Heart right ventricle (tissue), 16 donors: ENCODE measurements at regions of chr13 and their contacts with region 1.

Region 1: GRCh38 chr13:26929971-26930730 is 169.6 kb upstream of the GPR12 start:
- DNase-seq: peak; percentile 51 to 76
- ATAC-seq: peak in 7 of 8 donors; percentile 62 to 81 (median 71)
- H3K4me3 ChIP-seq: no peak overlapping the region
- H3K27ac ChIP-seq: no peak overlapping the region
- H3K4me1 ChIP-seq: peaks cover 0 to 5% (median 0%) of the 10 kb centered on the region in 9 donors
- H3K27me3 ChIP-seq: peaks cover 0 to 22% (median 4%) of the 10 kb centered on the region in 7 donors
- CTCF ChIP-seq: peak; percentile 91 to 98 (median 96)

Region 2: DNA sequence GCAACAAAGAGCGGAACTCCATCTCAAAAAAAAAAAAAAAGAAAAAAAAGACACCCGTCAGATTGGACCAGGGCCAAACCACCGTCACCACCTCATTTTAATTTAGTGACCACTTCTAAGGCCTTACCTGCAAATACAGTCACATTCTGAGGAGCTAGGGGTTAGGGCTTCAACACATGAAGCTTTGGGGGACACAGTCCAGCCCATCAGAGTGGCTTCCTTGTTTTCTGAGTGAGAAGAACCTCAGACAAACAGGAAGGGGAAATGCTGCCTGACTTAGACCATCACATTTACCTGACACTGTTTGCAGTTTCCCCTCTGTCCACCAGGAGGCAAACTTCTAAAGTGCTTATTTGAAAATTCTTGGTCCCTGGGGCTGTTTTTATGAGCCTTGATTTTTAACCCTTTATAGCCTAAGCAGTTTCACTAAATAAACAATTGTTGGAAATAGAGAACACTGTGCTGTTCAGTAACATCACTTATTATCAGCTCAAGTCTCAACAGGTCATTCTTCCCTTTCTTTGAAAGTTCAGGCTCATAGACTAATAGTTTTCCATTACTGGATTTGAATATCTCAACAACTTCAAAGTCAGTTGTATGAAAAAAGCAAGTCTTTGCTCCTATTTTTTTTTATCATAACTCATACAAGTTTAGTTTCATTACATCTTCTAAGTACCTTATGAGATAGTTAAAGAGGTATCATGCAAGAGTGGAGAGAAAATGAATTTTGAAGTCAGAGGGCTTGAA is 447.5 kb before region 1 on chr13:
- intact Hi-C with region 1: loop called in 2 of 10 experiments (anchors 5 to 10 kb)
- DNase-seq: peak in 1 of 2 donors; percentile 62
- ATAC-seq: peak in 3 of 8 donors; percentile 39 to 50 (median 46)
- H3K4me3 ChIP-seq: no peak overlapping the region
- H3K27ac ChIP-seq: peak overlapping the region in 1 of 10 donors; percentile 27
- H3K4me1 ChIP-seq: peaks cover 0 to 14% (median 3%) of the 10 kb centered on the region in 9 donors
- H3K27me3 ChIP-seq: no peaks in the 10 kb centered on the region
- CTCF ChIP-seq: peak; percentile 75 to 92 (median 87)

Region 3: DNA sequence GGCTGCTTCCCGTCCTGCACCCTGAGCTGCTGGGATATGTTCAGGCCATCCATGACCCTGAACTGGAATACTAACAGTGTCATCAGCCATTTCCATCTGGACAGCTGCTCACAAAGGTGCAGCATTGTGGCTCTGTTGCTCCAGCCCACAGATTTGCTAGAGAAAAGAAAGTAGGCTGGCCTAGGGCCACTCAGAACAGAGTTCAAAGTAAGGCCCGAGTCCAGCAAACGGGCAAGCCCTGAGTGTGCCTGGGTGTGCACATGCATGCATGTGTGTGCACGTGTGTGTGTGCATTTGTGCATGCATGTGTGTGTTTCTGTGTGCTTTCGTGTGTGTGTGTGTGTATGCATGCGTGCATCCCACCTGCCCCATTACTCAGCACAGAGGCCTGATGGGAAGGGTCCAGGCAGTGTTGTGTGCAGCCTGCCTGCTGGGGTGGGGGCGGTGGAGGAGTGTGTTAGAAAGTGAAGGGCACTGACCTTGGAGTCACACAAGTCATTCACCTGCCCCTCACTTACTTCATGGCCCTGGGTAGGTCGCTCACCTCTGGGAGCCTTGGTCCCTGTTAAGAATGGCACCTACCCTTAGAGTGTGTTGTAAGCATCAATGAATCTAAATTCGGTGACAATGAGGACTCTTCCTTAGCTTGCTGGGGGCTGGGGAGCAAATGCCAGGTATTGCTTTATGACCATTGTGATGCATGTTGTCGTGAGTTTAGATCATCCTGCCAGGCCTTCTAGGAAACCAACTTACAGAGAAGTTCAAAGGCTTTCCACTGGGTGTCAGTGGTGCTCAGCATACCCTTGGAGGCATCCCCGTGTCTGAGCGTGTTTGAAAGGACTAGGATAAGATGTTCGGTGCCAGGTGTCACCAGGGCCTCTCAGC is 222.8 kb before region 1 on chr13:
- intact Hi-C with region 1: loop called (anchors 2 to 5 kb)
- DNase-seq: peak in 1 of 2 donors; percentile 36
- ATAC-seq: peak; percentile 43 to 89 (median 74)
- H3K4me3 ChIP-seq: no peak overlapping the region
- H3K27ac ChIP-seq: no peak overlapping the region
- H3K4me1 ChIP-seq: no peaks in the 10 kb centered on the region
- H3K27me3 ChIP-seq: peaks cover 0 to 37% (median 6%) of the 10 kb centered on the region in 7 donors
- CTCF ChIP-seq: peak; percentile 42 to 77 (median 66)